Transverse colon (tissue), 4 donors: ENCODE measurements at regions of chr1 and their contacts with region 1.

Region 1: GRCh38 chr1:11214698-11215380 is 25.7 kb downstream of the ANGPTL7 start:
- DNase-seq: no peak
- H3K4me3 ChIP-seq: no peak overlapping the region
- H3K27ac ChIP-seq: no peak overlapping the region
- H3K4me1 ChIP-seq: no peaks in the 10 kb centered on the region
- H3K27me3 ChIP-seq: no peaks in the 10 kb centered on the region
- CTCF ChIP-seq: no peak
- EP300 ChIP-seq: no peak
- POLR2A ChIP-seq: no peak

Region 2: GRCh38 chr1:10651389-10651766 is 563.5 kb before region 1 on chr1:
- in situ Hi-C with region 1: no loop called
- intact Hi-C with region 1: no loop called
- DNase-seq: no peak
- H3K4me3 ChIP-seq: no peak overlapping the region
- H3K27ac ChIP-seq: peak overlapping the region; percentile 10 to 82 (median 70)
- H3K4me1 ChIP-seq: peaks cover 0 to 5% (median 0%) of the 10 kb centered on the region in 4 donors
- H3K27me3 ChIP-seq: no peaks in the 10 kb centered on the region
- CTCF ChIP-seq: no peak
- EP300 ChIP-seq: no peak
- POLR2A ChIP-seq: no peak

Region 3: DNA sequence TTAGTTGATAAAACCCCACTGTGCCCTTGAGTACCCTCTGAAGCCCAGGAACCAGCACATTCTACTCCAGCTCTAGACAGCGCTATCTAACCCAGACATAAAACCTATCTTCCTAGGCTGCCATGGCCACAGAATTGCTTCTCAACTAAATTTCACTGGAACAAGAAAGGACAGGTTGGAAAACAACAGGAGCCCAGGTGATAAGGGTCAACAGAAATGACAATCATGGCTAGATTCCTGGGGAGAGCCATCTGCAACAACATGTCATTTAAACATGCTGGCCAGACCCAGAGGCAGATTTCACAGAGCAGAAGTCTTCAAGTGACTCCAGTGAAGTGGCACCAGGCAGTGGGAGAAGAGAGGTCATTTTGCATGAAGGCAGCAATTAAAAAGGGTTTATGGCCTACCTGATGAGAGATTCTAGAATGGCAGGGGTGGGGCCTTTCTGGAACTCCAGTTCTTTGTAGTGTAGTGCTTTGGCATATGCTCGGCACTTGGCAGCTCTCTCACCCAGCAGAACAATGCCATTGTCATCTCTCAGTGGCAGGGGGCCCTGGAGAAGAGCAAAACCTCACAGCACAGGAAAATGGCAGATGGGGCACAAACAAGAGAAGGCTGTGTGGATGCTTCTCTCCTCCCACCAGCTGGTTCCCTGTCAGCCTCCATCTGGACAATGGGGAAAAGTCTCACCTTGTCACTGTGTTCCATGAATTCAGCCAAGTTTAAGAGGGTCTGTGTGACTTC is 15.8 kb before region 1 on chr1:
- in situ Hi-C with region 1: no loop called
- intact Hi-C with region 1: no loop called
- DNase-seq: no peak
- H3K4me3 ChIP-seq: no peak overlapping the region
- H3K27ac ChIP-seq: no peak overlapping the region
- H3K4me1 ChIP-seq: no peaks in the 10 kb centered on the region
- H3K27me3 ChIP-seq: no peaks in the 10 kb centered on the region
- CTCF ChIP-seq: no peak
- EP300 ChIP-seq: no peak
- POLR2A ChIP-seq: no peak

Region 4: DNA sequence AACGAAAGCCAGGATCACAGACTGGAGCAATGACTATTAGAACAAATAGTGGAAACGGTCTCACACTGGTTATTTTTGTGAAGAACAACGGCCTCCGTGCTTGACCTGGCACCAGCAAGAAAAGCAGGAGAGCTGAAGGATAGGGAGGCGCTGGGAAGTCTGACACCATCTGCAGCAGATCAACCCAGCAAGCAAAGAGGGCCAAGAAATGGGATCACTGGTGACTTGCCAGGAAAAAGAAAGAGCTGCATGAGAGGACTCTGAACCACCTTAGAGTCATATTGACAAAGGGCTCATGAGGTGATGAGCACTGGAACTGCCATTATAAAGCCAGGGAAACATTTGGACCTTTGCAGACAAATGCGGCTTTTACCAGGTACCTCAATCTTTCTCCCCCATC is 22.5 kb after region 1 on chr1:
- in situ Hi-C with region 1: no loop called
- intact Hi-C with region 1: loop called (anchors 1 kb)
- DNase-seq: no peak
- H3K4me3 ChIP-seq: no peak overlapping the region
- H3K27ac ChIP-seq: peak overlapping the region in 1 of 4 donors; percentile 17
- H3K4me1 ChIP-seq: no peaks in the 10 kb centered on the region
- H3K27me3 ChIP-seq: no peaks in the 10 kb centered on the region
- CTCF ChIP-seq: no peak
- EP300 ChIP-seq: no peak
- POLR2A ChIP-seq: no peak

Region 5: DNA sequence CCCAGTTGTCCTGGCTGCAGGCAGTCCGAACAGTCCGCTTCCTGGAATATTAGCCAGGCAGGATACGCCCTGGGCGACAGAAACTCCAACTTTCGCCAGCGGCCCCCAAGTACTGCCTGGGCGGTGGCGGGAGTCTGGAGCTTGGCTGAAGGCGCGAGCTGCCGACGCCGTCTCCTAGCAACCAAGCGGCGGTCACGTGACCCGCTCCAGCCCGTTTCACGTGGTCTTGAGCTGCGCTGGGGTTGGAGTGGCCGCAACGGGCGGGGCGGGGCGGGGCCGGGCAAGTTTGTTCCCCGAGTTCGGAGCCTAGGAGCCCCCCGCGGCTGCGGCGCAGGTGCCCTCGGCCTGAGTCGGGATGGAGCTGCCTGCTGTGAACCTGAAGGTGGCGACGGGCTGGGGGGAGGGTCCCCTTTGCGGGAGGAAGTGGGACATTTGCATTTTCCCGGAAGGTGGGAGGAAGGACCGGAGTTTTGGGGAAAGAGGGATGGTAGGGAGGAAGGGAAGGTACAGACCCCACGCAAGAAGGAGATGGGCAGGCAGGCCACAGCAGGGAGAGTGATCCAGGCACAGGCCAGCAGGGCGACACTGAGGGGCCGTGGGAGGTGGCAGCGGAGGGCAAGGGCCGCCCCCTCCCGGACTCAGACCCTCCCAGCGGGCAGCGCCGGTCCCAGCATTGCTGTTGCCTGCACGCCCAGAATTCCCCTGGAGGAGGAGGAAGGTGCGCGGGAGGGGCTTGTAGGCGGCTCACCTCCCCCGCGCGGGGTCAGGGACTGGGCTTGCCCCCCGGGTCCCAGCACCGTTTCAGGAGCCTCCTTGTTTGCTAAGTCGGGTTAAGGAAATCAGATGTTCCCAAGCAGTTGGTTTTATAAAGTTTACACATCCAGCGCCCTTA is 521.3 kb after region 1 on chr1 and contains the start of gene AGTRAP:
- in situ Hi-C with region 1: no loop called
- intact Hi-C with region 1: no loop called
- DNase-seq: peak; percentile 96
- H3K4me3 ChIP-seq: peak within 1 kb of the TSS; percentile 67 to 82 (median 78)
- H3K27ac ChIP-seq: peak within 1 kb of the TSS; percentile 77 to 90 (median 84)
- H3K4me1 ChIP-seq: peaks cover 6 to 39% (median 24%) of the 10 kb centered on the region in 4 donors
- H3K27me3 ChIP-seq: no peaks in the 10 kb centered on the region
- CTCF ChIP-seq: peak in 2 of 5 experiments; percentile 9 to 11
- EP300 ChIP-seq: no peak
- POLR2A ChIP-seq: no peak
- total RNA-seq, gene AGTRAP: 1.2 to 27.0 (median 22.7) TPM